Caco-2 (cell line): ENCODE measurements at regions of chr14 and their contacts with region 1.

Region 1: DNA sequence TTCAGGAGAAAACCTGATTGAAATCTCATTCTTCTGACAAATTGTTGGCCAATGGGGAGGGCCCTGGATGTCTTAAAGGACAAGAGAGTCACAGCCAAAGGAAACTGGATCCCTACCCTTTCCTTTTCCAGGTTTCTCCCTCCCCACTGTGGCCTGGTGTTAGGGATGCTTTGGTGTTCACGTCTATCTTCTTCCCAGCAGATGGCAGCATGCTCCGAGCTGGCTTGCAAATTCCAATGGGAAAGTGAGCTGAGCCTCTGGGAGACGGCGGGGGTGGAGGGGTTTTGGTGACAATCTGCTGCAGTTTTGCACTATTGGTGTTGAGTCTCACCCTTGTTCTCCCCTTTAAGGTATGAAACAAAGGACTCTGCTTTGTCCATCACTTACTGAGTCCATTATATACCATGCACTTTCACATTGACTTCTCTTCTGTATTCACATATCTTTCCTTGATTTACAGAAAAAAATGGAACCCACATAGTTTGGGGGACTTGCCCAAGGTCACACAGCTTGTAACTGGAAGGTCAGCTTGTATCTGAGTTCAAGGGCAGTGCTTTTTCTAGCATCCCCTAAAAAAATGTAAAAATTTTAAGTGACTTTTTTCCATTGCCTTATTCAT is 39.3 kb downstream of the CCDC177 start:
- DNase-seq: peak; percentile 68 to 74
- H3K4me3 ChIP-seq: no peak overlapping the region
- H3K4me3 Mint-ChIP-seq: no peak overlapping the region
- H3K27ac Mint-ChIP-seq: no peak overlapping the region
- H3K4me1 ChIP-seq: peaks cover 19% of the 10 kb centered on the region
- H3K4me1 Mint-ChIP-seq: peaks cover 6% of the 10 kb centered on the region
- H3K27me3 ChIP-seq: no peaks in the 10 kb centered on the region
- H3K27me3 Mint-ChIP-seq: no peaks in the 10 kb centered on the region
- CTCF ChIP-seq: peak; percentile 71 to 89

Region 2: DNA sequence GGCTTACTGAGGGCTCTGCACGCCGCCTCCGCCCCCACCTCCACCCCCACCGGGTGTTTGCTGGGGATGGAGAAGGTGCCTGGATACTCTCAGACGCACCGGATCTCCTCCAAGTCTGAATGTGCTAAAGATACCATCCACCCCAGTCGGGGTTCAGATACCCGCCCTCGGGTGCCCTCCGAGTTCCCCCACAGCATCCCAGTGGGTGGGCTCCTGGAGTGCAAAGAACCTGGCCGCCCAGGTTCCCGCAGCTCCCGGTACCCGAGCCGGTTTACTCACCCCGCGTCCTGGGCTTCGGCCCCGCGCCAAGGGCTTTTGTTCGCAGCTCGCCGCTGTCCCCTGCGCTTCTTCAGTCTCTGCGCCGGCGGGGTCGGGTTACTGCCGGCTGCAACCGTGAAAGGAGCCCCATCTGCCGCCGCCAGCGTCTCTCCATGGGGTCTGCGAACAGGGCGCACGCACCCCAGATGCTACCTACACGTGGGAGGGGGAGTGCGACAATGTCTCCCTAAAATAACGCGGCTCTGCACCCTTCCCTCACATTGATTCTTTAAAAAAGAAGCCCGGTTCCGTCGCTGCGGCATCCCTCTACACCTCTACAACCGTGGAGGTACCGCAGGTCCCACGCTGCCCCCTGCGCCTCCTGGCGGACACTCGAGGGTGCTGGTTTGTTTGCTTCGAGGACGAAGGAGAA is 39.1 kb after region 1 on chr14 and contains the start of gene CCDC177:
- CTCF ChIA-PET with region 1: interaction called, 52 read pairs
- POLR2A ChIA-PET with region 1: interaction called, 4 read pairs
- intact Hi-C with region 1: loop called (anchors 1 kb)
- DNase-seq: peak; percentile 59 to 81
- H3K4me3 ChIP-seq: peak within 1 kb of the TSS; percentile 26
- H3K4me3 Mint-ChIP-seq: peak within 1 kb of the TSS; percentile 87
- H3K27ac Mint-ChIP-seq: peak within 1 kb of the TSS; percentile 39
- H3K4me1 ChIP-seq: peaks cover 40% of the 10 kb centered on the region
- H3K4me1 Mint-ChIP-seq: peaks cover 31% of the 10 kb centered on the region
- H3K27me3 ChIP-seq: no peaks in the 10 kb centered on the region
- H3K27me3 Mint-ChIP-seq: peaks cover 3% of the 10 kb centered on the region
- CTCF ChIP-seq: peak; percentile 89 to 92
- total RNA-seq, gene CCDC177: 0.56 and 0.82 TPM in 2 replicates

Region 3: GRCh38 chr14:69580009-69580577 is 44.8 kb after region 1 on chr14:
- CTCF ChIA-PET with region 1: interaction called, 52 read pairs
- POLR2A ChIA-PET with region 1: no interaction called
- intact Hi-C with region 1: no loop called
- DNase-seq: peak; percentile 71 to 73
- H3K4me3 ChIP-seq: no peak overlapping the region
- H3K4me3 Mint-ChIP-seq: no peak overlapping the region
- H3K27ac Mint-ChIP-seq: no peak overlapping the region
- H3K4me1 ChIP-seq: no peaks in the 10 kb centered on the region; the same call in 1 of the 2 replicates
- H3K4me1 Mint-ChIP-seq: peaks cover 16% of the 10 kb centered on the region
- H3K27me3 ChIP-seq: no peaks in the 10 kb centered on the region
- H3K27me3 Mint-ChIP-seq: no peaks in the 10 kb centered on the region
- CTCF ChIP-seq: peak; percentile 37 to 77